ENCODE measurements at regions of chr16 and their contacts with region 1.

Region 1: GRCh38 chr16:48609652-48610029 is 339 bp downstream of the N4BP1 start:
- DNase-seq: no peak
- ATAC-seq: peak; percentile 13
- H3K4me3 ChIP-seq: peak overlapping the region; percentile 92
- H3K4me3 Mint-ChIP-seq: no peak overlapping the region
- H3K27ac ChIP-seq: peak overlapping the region; percentile 67 to 87
- H3K27ac Mint-ChIP-seq: peak overlapping the region; percentile 95
- H3K4me1 ChIP-seq: peaks cover 84% of the 10 kb centered on the region
- H3K4me1 Mint-ChIP-seq: peaks cover 52% of the 10 kb centered on the region
- H3K27me3 ChIP-seq: no peaks in the 10 kb centered on the region
- H3K27me3 Mint-ChIP-seq: no peaks in the 10 kb centered on the region
- CTCF ChIP-seq: no peak

Region 2: DNA sequence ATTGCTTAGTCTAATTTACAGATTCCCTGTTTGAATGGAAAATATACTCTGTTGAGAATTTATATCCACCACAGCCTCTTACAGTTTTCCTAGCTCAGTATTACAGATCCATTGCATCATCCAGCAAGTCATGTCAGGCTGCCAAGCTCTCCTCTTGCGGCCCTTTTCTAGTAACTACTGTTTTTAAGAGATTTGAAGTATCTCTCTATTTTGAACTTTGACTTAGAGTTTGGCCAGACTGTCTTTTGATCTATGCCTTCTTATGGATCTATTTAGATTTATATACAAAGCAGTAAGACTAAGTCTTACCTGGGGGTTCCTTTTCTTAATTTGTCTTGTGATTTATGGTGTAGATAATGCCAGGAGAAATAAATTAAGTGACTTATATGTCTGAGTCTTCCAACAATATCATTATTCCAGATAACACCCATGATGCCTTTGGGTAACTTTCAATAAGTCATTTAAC is 309.2 kb before region 1 on chr16:
- CTCF ChIA-PET with region 1: no interaction called
- POLR2A ChIA-PET with region 1: no interaction called
- intact Hi-C with region 1: no loop called
- DNase-seq: no peak
- ATAC-seq: no peak
- H3K4me3 ChIP-seq: no peak overlapping the region
- H3K4me3 Mint-ChIP-seq: no peak overlapping the region
- H3K27ac ChIP-seq: no peak overlapping the region
- H3K27ac Mint-ChIP-seq: no peak overlapping the region
- H3K4me1 ChIP-seq: no peaks in the 10 kb centered on the region
- H3K4me1 Mint-ChIP-seq: peaks cover under 1% of the 10 kb centered on the region
- H3K27me3 ChIP-seq: no peaks in the 10 kb centered on the region
- H3K27me3 Mint-ChIP-seq: no peaks in the 10 kb centered on the region
- CTCF ChIP-seq: no peak

Region 3: DNA sequence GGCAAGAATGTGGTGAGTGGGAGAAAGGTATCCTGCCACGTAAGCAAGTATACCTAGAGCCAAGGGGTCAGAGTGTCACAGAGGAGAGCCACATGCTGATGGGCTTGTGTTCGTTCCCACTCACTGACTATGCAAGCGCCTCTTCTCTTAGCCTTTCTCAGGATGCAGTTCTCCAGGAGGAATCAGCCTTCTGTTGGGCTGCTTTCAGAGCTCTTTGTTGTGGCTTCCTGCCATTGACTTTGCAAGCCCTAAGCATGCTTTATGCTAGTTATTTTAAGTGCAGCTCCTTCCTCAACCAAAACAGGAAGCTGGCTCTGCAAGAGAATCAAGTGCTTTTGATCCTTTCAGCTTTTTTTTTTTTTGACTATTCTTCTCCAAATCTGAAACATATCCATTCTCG is 291.0 kb before region 1 on chr16:
- CTCF ChIA-PET with region 1: no interaction called
- POLR2A ChIA-PET with region 1: interaction called, 17 read pairs
- intact Hi-C with region 1: no loop called
- DNase-seq: peak in 12 of 14 experiments; percentile 4 to 82 (median 28)
- ATAC-seq: peak; percentile 96
- H3K4me3 ChIP-seq: peak overlapping the region; percentile 28
- H3K4me3 Mint-ChIP-seq: peak overlapping the region; percentile 77
- H3K27ac ChIP-seq: peak overlapping the region in 1 of 2 donors; percentile 41
- H3K27ac Mint-ChIP-seq: peak overlapping the region; percentile 89
- H3K4me1 ChIP-seq: peaks cover 24% of the 10 kb centered on the region
- H3K4me1 Mint-ChIP-seq: peaks cover 70% of the 10 kb centered on the region
- H3K27me3 ChIP-seq: no peaks in the 10 kb centered on the region
- H3K27me3 Mint-ChIP-seq: no peaks in the 10 kb centered on the region
- CTCF ChIP-seq: no peak

Region 4: GRCh38 chr16:48385272-48386150 is 224.1 kb before region 1 on chr16 and contains the start of gene SIAH1:
- CTCF ChIA-PET with region 1: no interaction called
- POLR2A ChIA-PET with region 1: interaction called, 30 read pairs
- intact Hi-C with region 1: loop called (anchors 5 kb)
- DNase-seq: peak; percentile 73 to 96 (median 86)
- ATAC-seq: peak; percentile 80
- H3K4me3 ChIP-seq: peak within 1 kb of the TSS; percentile 81
- H3K4me3 Mint-ChIP-seq: peak within 1 kb of the TSS; percentile 98
- H3K27ac ChIP-seq: peak within 1 kb of the TSS in 1 of 2 donors; percentile 46
- H3K27ac Mint-ChIP-seq: peak within 1 kb of the TSS; percentile 92
- H3K4me1 ChIP-seq: peaks cover 12% of the 10 kb centered on the region
- H3K4me1 Mint-ChIP-seq: peaks cover 27% of the 10 kb centered on the region
- H3K27me3 ChIP-seq: no peaks in the 10 kb centered on the region
- H3K27me3 Mint-ChIP-seq: no peaks in the 10 kb centered on the region
- CTCF ChIP-seq: no peak
- total RNA-seq, gene SIAH1: 40.9 to 43.0 TPM

Region 5: GRCh38 chr16:48596326-48596725 is 13.3 kb before region 1 on chr16:
- CTCF ChIA-PET with region 1: interaction called, 7 read pairs
- POLR2A ChIA-PET with region 1: interaction called, 9 read pairs
- intact Hi-C with region 1: loop called in 1 of 2 experiments (anchors 2 kb)
- DNase-seq: peak in 4 of 14 experiments; percentile 23 to 48 (median 32)
- ATAC-seq: no peak
- H3K4me3 ChIP-seq: no peak overlapping the region
- H3K4me3 Mint-ChIP-seq: no peak overlapping the region
- H3K27ac ChIP-seq: no peak overlapping the region
- H3K27ac Mint-ChIP-seq: no peak overlapping the region
- H3K4me1 ChIP-seq: peaks cover 30% of the 10 kb centered on the region
- H3K4me1 Mint-ChIP-seq: peaks cover 75% of the 10 kb centered on the region
- H3K27me3 ChIP-seq: no peaks in the 10 kb centered on the region
- H3K27me3 Mint-ChIP-seq: no peaks in the 10 kb centered on the region
- CTCF ChIP-seq: no peak

Region 6: DNA sequence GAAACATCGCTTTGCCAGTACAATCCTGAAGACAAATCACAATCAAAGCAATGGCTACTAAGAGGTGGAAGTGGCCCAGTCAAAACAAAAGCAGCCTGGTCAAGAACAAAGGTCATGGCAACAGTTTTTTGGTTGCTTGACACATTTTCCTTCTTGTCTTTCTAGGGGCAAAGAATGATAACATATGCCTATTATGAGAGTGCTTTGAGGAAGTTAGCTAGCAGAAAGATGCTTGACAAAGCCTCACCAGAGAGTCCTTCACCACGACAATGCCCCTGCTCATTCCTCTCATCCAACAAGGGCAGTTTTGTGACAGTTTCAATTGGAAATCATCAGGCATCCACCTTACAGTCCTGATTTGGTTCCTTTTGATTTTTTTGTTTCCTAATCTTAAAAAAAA is 32.1 kb after region 1 on chr16:
- CTCF ChIA-PET with region 1: no interaction called
- POLR2A ChIA-PET with region 1: no interaction called
- intact Hi-C with region 1: no loop called
- DNase-seq: no peak
- ATAC-seq: no peak
- H3K4me3 ChIP-seq: no peak overlapping the region
- H3K4me3 Mint-ChIP-seq: no peak overlapping the region
- H3K27ac ChIP-seq: no peak overlapping the region
- H3K27ac Mint-ChIP-seq: no peak overlapping the region
- H3K4me1 ChIP-seq: no peaks in the 10 kb centered on the region
- H3K4me1 Mint-ChIP-seq: no peaks in the 10 kb centered on the region
- H3K27me3 ChIP-seq: no peaks in the 10 kb centered on the region
- H3K27me3 Mint-ChIP-seq: no peaks in the 10 kb centered on the region
- CTCF ChIP-seq: no peak